Posterior vena cava (tissue), 2 donors: ENCODE measurements at regions of chr2 and their contacts with region 1.

Region 1: GRCh38 chr2:120861576-120862191 is 126.0 kb downstream of the GLI2 start:
- DNase-seq: peak; percentile 79

Region 2: GRCh38 chr2:120905824-120906571 is 44.3 kb after region 1 on chr2:
- intact Hi-C with region 1: loop called in 1 of 2 experiments (anchors 1 kb)
- DNase-seq: no peak

Region 3: DNA sequence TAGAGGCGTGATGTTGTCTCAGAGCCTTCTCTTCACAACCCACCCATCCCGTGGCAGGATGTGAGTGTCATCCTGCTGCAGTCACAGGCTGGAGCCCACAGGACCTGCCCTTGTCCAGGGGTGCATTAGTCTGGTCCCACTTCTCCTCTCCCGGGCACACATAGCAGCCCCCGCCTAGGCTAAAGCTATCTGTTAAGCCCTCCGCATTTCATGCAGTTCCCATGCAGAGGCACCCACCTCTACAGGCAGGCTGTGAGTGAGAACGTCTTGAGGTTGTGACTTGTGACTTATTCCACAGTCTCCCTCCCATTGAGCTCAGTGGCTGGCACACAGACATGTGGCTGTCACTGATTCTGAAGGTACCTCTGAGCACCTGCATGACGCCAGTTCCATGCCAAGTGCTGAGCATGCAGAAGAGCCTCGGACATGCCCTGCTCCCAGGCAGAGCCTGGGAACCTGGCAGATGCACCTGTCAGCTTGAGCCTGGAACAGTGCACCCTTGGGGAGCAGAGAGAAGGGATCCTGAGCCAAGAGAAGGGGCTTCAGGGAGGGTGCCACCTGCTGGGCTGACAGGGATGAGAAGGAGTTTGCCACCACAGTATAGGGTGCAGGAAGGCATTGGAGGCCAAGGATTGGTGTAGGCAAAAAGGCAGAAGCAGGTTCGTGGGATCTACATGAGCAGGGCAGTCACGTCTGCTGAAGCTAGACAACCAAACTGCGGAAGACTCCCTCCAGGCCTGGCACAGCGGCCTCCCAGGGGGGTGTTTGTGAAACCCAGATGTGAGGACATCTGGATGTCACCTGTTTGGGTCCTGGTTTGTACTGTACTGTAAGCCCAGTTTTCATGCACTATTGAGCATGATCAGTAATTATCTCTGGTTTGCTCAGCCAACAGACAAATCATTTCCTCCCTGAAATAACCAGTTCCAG is 87.6 kb after region 1 on chr2:
- intact Hi-C with region 1: no loop called
- DNase-seq: peak; percentile 75